H1 (cell line): ENCODE measurements at regions of chr9 and their contacts with region 1.

Region 1: GRCh38 chr9:108565651-108566378 is 290.0 kb downstream of the ACTL7B start:
- DNase-seq: peak in 1 of 2 experiments; percentile 31
- H3K4me3 ChIP-seq: no peak overlapping the region
- H3K27ac ChIP-seq: no peak overlapping the region
- H3K4me1 ChIP-seq: no peaks in the 10 kb centered on the region
- H3K27me3 ChIP-seq: no peaks in the 10 kb centered on the region
- CTCF ChIP-seq: peak; percentile 39 to 87 (median 78)
- EP300 ChIP-seq: no peak
- POLR2A ChIP-seq: no peak
- RAD21 ChIP-seq: peak; percentile 95 to 96

Region 2: GRCh38 chr9:108316630-108317029 is 249.2 kb before region 1 on chr9:
- CTCF ChIA-PET with region 1: no interaction called
- POLR2A ChIA-PET with region 1: no interaction called
- DNase-seq: no peak
- H3K4me3 ChIP-seq: no peak overlapping the region
- H3K27ac ChIP-seq: no peak overlapping the region
- H3K4me1 ChIP-seq: no peaks in the 10 kb centered on the region
- H3K27me3 ChIP-seq: no peaks in the 10 kb centered on the region
- CTCF ChIP-seq: no peak
- EP300 ChIP-seq: no peak
- POLR2A ChIP-seq: no peak
- RAD21 ChIP-seq: no peak

Region 3: GRCh38 chr9:108468402-108468801 is 97.4 kb before region 1 on chr9:
- CTCF ChIA-PET with region 1: interaction called, 33 read pairs
- POLR2A ChIA-PET with region 1: no interaction called
- DNase-seq: peak; percentile 17 to 84
- H3K4me3 ChIP-seq: no peak overlapping the region
- H3K27ac ChIP-seq: no peak overlapping the region
- H3K4me1 ChIP-seq: 0 out of 7 replicates have a peak, but pooled peaks cover 0 to 2% (median 0%) of the 10 kb centered on the region in 4 experiments
- H3K27me3 ChIP-seq: no peaks in the 10 kb centered on the region
- CTCF ChIP-seq: peak in 2 of 3 experiments; percentile 60 to 73; a peak in 3 of 4 replicates
- EP300 ChIP-seq: no peak
- POLR2A ChIP-seq: no peak
- RAD21 ChIP-seq: peak; percentile 43 to 52

Region 4: GRCh38 chr9:108535526-108535925 is 30.3 kb before region 1 on chr9:
- CTCF ChIA-PET with region 1: interaction called, 15 read pairs
- POLR2A ChIA-PET with region 1: no interaction called
- DNase-seq: no peak
- H3K4me3 ChIP-seq: no peak overlapping the region
- H3K27ac ChIP-seq: no peak overlapping the region
- H3K4me1 ChIP-seq: no peaks in the 10 kb centered on the region
- H3K27me3 ChIP-seq: no peaks in the 10 kb centered on the region
- CTCF ChIP-seq: peak; percentile 27 to 55 (median 38)
- EP300 ChIP-seq: no peak
- POLR2A ChIP-seq: no peak
- RAD21 ChIP-seq: peak; percentile 24 to 45

Region 5: GRCh38 chr9:108671176-108671575 is 105.4 kb after region 1 on chr9:
- CTCF ChIA-PET with region 1: interaction called, 10 read pairs
- POLR2A ChIA-PET with region 1: no interaction called
- DNase-seq: no peak
- H3K4me3 ChIP-seq: no peak overlapping the region
- H3K27ac ChIP-seq: no peak overlapping the region
- H3K4me1 ChIP-seq: peaks cover 0 to 3% (median 2%) of the 10 kb centered on the region in 4 experiments; a peak in 3 of 7 replicates
- H3K27me3 ChIP-seq: no peaks in the 10 kb centered on the region; a peak in 1 of 7 replicates
- CTCF ChIP-seq: peak; percentile 64 to 73 (median 70)
- EP300 ChIP-seq: no peak
- POLR2A ChIP-seq: no peak
- RAD21 ChIP-seq: peak; percentile 93